HepG2 (cell line): ENCODE measurements at regions of chr6 and their contacts with region 1.

Region 1: GRCh38 chr6:73520688-73521350 is at the start of gene EEF1A1:
- DNase-seq: peak; percentile 98
- ATAC-seq: peak; percentile 79
- H3K4me3 ChIP-seq: peak within 1 kb of the TSS; percentile 78 to 100 (median 97)
- H3K27ac ChIP-seq: peak within 1 kb of the TSS; percentile 100
- H3K4me1 ChIP-seq: peaks cover 46% of the 10 kb centered on the region
- H3K27me3 ChIP-seq: no peaks in the 10 kb centered on the region; a peak in 1 of 5 replicates
- CTCF ChIP-seq: peak; percentile 35
- EP300 ChIP-seq: peak in 1 of 2 experiments; percentile 36; a peak in 1 of 4 replicates
- POLR2A ChIP-seq: peak; percentile 100
- RAD21 ChIP-seq: no peak
- total RNA-seq, gene EEF1A1: 13,726 and 19,145 TPM in 2 replicates

Region 2: GRCh38 chr6:73461537-73462350 is 59.1 kb before region 1 on chr6 and contains the start of gene MTO1:
- CTCF ChIA-PET with region 1: no interaction called
- POLR2A ChIA-PET with region 1: interaction called, 14 read pairs
- in situ Hi-C with region 1: no loop called
- intact Hi-C with region 1: no loop called
- DNase-seq: peak; percentile 89
- ATAC-seq: peak; percentile 96
- H3K4me3 ChIP-seq: peak within 1 kb of the TSS; percentile 94 to 99 (median 99)
- H3K27ac ChIP-seq: peak within 1 kb of the TSS; percentile 88
- H3K4me1 ChIP-seq: peaks cover 24% of the 10 kb centered on the region
- H3K27me3 ChIP-seq: no peaks in the 10 kb centered on the region; a peak in 1 of 5 replicates
- CTCF ChIP-seq: no peak
- EP300 ChIP-seq: 0 out of 4 replicates have a peak, but pooled peaks of 1 of the 2 experiments have one; percentile 20
- POLR2A ChIP-seq: peak; percentile 74 to 81
- RAD21 ChIP-seq: no peak
- total RNA-seq, gene MTO1: 31.9 and 45.3 TPM in 2 replicates

Region 3: DNA sequence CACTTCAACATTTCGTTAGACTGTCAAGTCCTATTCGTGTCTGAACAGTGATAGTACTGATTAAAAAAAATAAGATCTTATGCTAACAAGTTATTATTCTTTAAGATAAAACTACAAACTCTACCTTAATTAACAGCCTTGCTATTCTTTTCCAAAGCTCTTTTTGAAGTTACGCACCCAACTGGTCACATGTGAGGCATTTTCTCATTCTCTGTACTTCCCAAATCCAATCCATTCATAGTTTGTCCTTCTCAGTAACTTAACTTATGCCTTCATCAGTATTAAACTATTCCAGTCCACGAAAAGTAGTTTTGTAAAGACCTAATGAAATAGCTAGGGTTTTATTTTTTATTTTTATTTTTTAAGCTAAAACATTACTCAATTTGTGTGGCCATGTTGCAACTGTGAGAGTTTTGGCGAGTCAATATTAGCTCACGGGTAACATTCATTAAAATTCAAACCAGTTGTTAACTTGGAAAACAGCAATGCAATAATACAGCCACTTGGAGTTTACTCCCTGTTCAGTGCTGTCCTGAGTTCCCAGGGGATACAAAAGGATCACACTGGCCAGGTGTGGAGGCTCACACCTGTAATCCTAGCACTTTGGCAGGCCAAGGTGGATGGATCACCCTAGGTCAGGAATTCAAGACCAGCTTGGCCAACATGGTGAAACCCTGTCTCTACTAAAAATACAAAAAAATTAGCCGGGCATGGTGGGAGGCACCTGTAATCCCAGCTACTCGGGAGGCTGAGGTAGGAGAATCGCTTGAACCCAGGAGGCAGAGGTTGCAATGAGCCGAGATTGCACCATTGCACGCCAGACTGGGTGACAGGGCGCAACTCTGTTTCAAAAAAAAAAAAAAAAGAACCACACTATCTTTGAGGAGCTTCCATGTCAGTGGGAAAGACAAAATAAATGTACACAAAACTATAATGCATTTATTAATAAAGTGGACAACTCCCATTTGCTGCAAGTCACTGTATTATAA is 27.9 kb after region 1 on chr6:
- CTCF ChIA-PET with region 1: no interaction called
- POLR2A ChIA-PET with region 1: interaction called, 26 read pairs
- in situ Hi-C with region 1: no loop called
- intact Hi-C with region 1: no loop called
- DNase-seq: peak; percentile 52
- ATAC-seq: peak; percentile 93
- H3K4me3 ChIP-seq: no peak overlapping the region
- H3K27ac ChIP-seq: peak overlapping the region; percentile 45
- H3K4me1 ChIP-seq: peaks cover 22% of the 10 kb centered on the region
- H3K27me3 ChIP-seq: no peaks in the 10 kb centered on the region
- CTCF ChIP-seq: no peak
- EP300 ChIP-seq: no peak
- POLR2A ChIP-seq: no peak
- RAD21 ChIP-seq: no peak

Region 4: DNA sequence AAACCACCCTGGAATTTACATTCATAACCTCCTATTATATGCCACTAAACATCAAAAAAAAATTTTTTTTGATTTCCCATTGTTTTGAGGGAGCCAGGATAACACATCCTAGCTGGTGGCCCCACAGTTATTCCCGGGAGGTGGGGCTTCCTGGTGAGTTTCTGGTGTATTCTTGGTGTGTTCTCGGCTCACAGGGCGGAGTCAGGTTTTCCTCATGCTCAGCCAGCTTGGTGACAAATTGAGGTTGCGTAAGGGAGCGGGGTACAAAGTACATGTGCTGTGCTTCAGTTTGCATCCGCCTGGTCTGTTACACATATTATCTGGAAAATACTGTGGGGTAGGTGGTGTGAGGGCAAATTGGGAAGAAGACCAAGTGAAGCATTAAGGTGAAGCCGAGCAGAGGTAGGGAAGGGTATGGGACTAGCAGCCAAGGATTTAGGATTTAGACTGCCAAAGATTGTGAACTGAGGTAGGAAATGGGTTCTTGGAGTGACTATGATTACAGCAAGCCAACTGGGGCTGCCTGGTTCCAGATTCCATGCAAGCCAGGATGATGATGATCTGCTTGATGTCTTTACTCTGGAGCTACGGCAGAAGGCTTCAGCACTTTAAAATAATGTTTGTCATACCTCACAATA is 46.3 kb after region 1 on chr6:
- CTCF ChIA-PET with region 1: no interaction called
- POLR2A ChIA-PET with region 1: interaction called, 130 read pairs
- in situ Hi-C with region 1: no loop called
- intact Hi-C with region 1: loop called (anchors 5 kb)
- DNase-seq: peak; percentile 96
- ATAC-seq: peak; percentile 86
- H3K4me3 ChIP-seq: peak overlapping the region; percentile 31 to 59 (median 32); a peak in 5 of 6 replicates
- H3K27ac ChIP-seq: peak overlapping the region; percentile 90
- H3K4me1 ChIP-seq: peaks cover 61% of the 10 kb centered on the region
- H3K27me3 ChIP-seq: no peaks in the 10 kb centered on the region
- CTCF ChIP-seq: no peak
- EP300 ChIP-seq: peak; percentile 77 to 83; a peak in 3 of 4 replicates
- POLR2A ChIP-seq: peak; percentile 66 to 67
- RAD21 ChIP-seq: no peak

Region 5: DNA sequence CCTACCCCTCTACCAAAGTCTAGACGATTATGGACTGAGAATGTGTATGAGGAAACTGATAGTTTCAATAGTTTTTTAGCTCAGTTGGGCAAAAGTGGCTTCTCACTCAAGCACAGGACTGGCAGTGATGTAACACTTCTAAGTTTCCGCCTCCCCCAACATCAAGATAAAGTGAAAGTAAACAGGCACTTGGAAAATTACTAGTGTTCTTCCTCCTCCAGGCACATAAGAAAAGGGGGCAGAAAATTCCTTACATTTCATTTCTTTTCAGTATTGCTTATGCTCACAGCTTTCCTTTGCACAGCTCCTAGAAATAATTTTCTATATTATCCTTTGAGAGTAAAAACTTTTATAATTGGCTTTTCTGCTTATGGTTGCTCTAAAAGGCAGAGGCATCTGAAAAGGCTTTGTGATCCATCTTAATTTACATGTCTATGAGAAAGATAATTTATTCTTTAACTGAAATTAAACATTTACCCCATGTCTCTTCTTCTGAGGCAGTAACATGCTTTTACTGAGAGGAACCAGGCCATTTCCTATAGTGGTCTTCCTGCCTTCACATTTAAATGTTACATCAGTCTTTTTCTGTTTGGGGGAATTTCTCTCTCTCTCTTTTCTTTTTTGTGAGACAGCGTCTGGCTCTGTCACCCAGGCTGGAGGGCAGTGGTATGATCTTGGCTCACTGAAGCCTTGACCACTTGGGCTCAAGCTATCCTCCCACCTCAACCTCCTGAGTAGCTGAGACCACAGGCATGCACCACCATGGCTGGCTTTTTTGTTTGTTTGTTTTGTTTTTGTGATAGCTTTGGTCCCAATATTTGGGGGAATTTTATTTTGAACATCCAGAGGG is 65.0 kb after region 1 on chr6:
- CTCF ChIA-PET with region 1: no interaction called
- POLR2A ChIA-PET with region 1: interaction called, 113 read pairs
- in situ Hi-C with region 1: loop called (anchors 10 kb)
- intact Hi-C with region 1: loop called (anchors 1 kb)
- DNase-seq: peak; percentile 88
- ATAC-seq: peak; percentile 69
- H3K4me3 ChIP-seq: peak overlapping the region; percentile 42 to 51 (median 44)
- H3K27ac ChIP-seq: peak overlapping the region; percentile 86
- H3K4me1 ChIP-seq: peaks cover 32% of the 10 kb centered on the region
- H3K27me3 ChIP-seq: no peaks in the 10 kb centered on the region
- CTCF ChIP-seq: no peak
- EP300 ChIP-seq: peak in 1 of 2 experiments; percentile 95; a peak in 2 of 4 replicates
- POLR2A ChIP-seq: peak in 1 of 2 experiments; percentile 39; a peak in 1 of 4 replicates
- RAD21 ChIP-seq: no peak

Region 6: GRCh38 chr6:73653571-73654424 is 133.0 kb after region 1 on chr6 and contains the start of gene SLC17A5:
- CTCF ChIA-PET with region 1: no interaction called
- POLR2A ChIA-PET with region 1: interaction called, 46 read pairs
- in situ Hi-C with region 1: no loop called
- intact Hi-C with region 1: loop called (anchors 1 kb)
- DNase-seq: peak; percentile 91
- ATAC-seq: peak; percentile 95
- H3K4me3 ChIP-seq: peak within 1 kb of the TSS; percentile 84 to 98 (median 86)
- H3K27ac ChIP-seq: peak within 1 kb of the TSS; percentile 96
- H3K4me1 ChIP-seq: peaks cover 28% of the 10 kb centered on the region
- H3K27me3 ChIP-seq: no peaks in the 10 kb centered on the region; a peak in 1 of 5 replicates
- CTCF ChIP-seq: no peak
- EP300 ChIP-seq: 0 out of 4 replicates have a peak, but pooled peaks of 1 of the 2 experiments have one; percentile 29
- POLR2A ChIP-seq: peak; percentile 68 to 87
- RAD21 ChIP-seq: 0 out of 2 replicates have a peak, but pooled peaks have one; percentile 4
- total RNA-seq, gene SLC17A5: 13.6 and 20.5 TPM in 2 replicates